ENCODE measurements at regions of chr3 and their contacts with region 1.

Region 1: GRCh38 chr3:47664519-47664918 is 85.9 kb upstream of the CSPG5 start:
- DNase-seq: peak; percentile 43
- ATAC-seq: no peak
- H3K4me3 ChIP-seq: no peak overlapping the region
- H3K27ac ChIP-seq: no peak overlapping the region
- H3K4me1 ChIP-seq: peaks cover 26% of the 10 kb centered on the region
- H3K27me3 ChIP-seq: no peaks in the 10 kb centered on the region
- CTCF ChIP-seq: peak; percentile 50; the same call in 1 of the 2 replicates

Region 2: DNA sequence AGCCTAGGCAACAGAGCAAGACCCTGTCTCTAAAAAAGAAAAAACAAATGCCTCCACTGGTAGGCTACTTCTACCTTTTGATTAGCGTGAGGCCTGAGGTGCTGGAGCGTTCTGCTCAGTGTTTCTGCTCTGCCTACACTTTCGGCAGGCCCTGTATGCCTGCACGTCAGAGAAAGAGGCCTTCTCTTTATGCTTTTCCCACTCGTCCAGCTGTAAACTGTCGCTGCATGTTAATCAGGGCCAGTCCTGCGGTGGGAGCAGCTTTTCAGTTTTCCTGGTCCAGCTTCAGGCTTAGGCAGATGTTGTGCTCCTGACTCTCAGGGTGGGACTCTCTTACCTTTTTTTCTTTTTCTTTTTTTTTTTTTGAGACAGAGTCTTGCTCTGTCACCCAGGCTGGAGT is 111.1 kb before region 1 on chr3:
- CTCF ChIA-PET with region 1: interaction called, 12 read pairs
- POLR2A ChIA-PET with region 1: no interaction called
- intact Hi-C with region 1: no loop called
- DNase-seq: no peak
- ATAC-seq: no peak
- H3K4me3 ChIP-seq: no peak overlapping the region
- H3K27ac ChIP-seq: no peak overlapping the region
- H3K4me1 ChIP-seq: no peaks in the 10 kb centered on the region
- H3K27me3 ChIP-seq: peaks cover 17% of the 10 kb centered on the region
- CTCF ChIP-seq: no peak

Region 3: GRCh38 chr3:47612178-47612577 is 52.3 kb before region 1 on chr3:
- CTCF ChIA-PET with region 1: no interaction called
- POLR2A ChIA-PET with region 1: interaction called, 3 read pairs
- intact Hi-C with region 1: loop called (anchors 5 kb)
- DNase-seq: peak; percentile 64
- ATAC-seq: peak; percentile 28; the same call in 1 of the 2 replicates
- H3K4me3 ChIP-seq: no peak overlapping the region
- H3K27ac ChIP-seq: no peak overlapping the region
- H3K4me1 ChIP-seq: peaks cover 18% of the 10 kb centered on the region
- H3K27me3 ChIP-seq: no peaks in the 10 kb centered on the region
- CTCF ChIP-seq: no peak

Measured in PC-3 (cell line).